HEK293 (cell line): ENCODE measurements at regions of chr2 and their contacts with region 1.

Region 1: DNA sequence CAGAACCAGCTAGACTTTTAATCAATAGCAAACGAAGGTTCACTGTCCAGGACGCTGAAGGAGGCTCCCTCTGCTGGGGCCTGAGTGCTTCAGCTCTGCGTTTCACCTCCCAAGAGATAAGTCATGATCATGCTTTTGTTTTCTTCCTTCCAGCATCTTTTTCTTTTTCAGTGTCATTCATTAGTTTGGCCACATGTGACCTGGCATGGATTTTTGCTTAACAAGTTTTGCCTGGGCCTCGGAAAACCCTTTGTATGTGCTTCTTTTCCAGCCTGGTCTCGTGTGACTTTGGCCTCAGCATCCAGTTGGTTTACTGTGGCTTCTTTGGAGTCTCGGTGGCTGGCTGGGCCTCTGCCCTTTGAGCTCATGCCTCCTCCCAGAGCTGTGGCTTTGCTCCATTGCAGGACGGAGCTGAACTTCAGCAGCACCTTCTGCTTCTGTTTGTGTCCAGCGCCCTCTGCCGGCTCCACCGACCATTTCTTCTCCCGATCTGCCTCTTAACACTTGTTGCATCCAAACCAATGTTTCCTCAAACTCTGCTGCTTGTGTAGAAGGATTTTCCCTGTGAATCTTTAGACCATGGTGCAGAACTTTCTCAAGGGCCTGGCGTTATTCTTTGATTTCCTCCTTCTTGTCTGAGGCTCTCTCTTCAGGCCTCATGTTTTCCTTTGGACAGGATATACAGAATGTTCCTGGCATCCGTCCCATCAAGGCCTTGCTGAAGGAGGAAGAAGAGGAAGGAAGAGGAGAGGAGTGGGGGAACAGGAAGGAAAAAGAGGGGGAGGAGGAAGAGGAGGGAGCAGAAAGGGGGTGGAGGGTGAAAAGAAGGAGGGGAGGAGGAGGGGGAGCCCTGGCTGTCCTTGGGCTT is 23.6 kb upstream of the HES6 start:
- H3K4me3 ChIP-seq: no peak overlapping the region
- H3K27ac ChIP-seq: no peak overlapping the region
- H3K4me1 ChIP-seq: no peaks in the 10 kb centered on the region
- CTCF ChIP-seq: peak; percentile 84

Region 2: DNA sequence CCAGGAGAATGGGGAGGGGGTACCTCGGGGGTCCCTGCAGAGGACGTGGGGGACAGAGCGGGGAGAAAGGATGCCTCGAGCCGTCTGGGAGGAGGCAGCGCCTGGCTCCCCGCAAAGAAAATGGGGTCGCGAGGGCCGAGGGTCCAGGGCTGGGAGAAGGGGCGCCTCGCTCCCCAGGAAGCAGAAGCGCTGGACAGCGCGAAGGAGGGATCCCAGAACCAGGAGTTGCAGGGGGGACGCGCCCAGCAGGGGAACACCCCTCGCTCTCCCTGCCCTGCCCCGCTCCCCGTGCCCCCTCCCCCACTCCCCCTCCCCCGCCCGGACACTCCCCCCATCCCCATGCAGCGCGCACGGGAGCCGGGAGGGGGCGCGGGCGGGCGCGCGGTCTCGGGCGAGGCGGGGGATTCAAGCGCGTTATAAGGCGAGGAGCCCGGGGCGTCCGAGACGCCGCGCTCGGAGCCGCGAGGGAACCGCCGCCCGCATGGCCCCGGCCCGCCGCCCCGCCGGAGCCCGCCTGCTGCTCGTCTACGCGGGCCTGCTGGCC is 104.8 kb before region 1 on chr2 and contains the start of gene ERFE:
- CTCF ChIA-PET with region 1: interaction called, 24 read pairs
- POLR2A ChIA-PET with region 1: interaction called, 4 read pairs
- H3K4me3 ChIP-seq: peak within 1 kb of the TSS; percentile 40
- H3K27ac ChIP-seq: peak within 1 kb of the TSS; percentile 63; the same call in 1 of the 2 replicates
- H3K4me1 ChIP-seq: no peaks in the 10 kb centered on the region; the same call in 1 of the 2 replicates
- CTCF ChIP-seq: no peak

Region 3: DNA sequence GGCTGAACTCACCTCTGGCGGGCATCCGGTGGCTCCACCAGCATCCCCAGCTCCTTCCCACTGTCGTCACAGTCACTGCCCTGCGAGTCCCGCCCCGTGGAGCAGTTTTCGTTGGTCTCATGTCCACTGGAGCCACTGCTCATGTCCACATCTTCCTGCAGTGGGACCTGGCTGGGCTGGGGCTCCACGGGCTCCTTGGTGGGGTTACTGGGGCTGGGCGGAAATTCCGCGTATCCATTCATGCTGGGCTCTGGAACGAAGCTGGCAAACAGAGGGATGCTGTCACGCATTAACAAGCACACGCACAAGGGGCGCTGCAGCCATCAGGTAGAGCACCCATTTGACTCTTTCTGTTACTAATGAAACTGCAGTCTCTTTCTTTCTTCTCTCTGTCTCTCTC is 14.3 kb after region 1 on chr2:
- CTCF ChIA-PET with region 1: interaction called, 54 read pairs
- POLR2A ChIA-PET with region 1: no interaction called
- H3K4me3 ChIP-seq: no peak overlapping the region
- H3K27ac ChIP-seq: no peak overlapping the region
- H3K4me1 ChIP-seq: no peaks in the 10 kb centered on the region
- CTCF ChIP-seq: peak; percentile 18; the same call in 1 of the 2 replicates

Region 4: GRCh38 chr2:238282861-238283738 is 19.7 kb after region 1 on chr2:
- CTCF ChIA-PET with region 1: interaction called, 54 read pairs
- POLR2A ChIA-PET with region 1: no interaction called
- H3K4me3 ChIP-seq: no peak overlapping the region
- H3K27ac ChIP-seq: no peak overlapping the region
- H3K4me1 ChIP-seq: peaks cover 16% of the 10 kb centered on the region
- CTCF ChIP-seq: no peak

Region 5: DNA sequence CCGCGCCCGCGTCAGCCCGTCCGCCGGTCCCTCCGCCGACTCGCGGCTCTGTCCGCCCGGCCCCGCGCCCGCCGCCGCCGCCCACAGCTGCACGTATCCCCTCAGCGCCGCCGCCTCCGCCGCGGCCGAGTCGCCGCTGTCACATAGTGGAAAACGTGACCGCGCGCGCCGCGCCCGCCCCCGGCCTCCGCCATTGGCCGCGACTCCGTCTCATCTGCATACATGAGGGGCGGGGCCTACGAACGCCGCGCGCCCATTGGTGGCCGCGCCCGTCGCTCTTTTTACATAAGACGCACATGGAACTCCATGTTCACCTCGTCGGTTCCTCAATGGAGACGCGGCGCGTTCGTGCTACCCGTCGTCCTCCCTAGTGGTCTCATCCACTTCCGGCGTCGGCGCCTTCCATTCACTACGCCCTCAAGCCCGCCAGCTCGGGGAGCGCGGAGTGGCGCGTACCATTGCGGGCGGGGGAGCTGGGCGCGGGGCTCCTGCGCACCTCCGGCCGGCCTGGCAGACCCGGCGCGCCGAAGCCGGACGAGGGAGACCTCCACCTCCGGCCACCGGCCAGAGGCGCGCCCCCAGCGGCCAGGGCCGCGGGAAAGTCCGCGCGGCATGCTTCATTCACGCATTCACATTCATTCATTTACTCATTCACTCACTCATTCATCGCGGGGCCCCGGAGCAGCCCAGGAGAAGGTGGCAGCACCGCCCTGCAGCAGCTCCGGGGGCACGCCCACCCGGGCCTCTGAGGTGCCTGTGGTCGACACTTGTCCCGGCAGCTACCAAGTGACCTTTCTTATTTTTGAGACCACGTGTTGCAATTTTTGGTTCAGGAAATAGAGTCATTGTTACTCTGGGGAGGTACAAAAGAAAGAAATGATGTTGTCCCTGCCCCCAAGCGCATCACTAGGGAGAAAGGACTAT is 25.5 kb after region 1 on chr2:
- CTCF ChIA-PET with region 1: interaction called, 17 read pairs
- POLR2A ChIA-PET with region 1: interaction called, 3 read pairs
- H3K4me3 ChIP-seq: peak overlapping the region; percentile 74
- H3K27ac ChIP-seq: peak overlapping the region; percentile 46; the same call in 1 of the 2 replicates
- H3K4me1 ChIP-seq: peaks cover 16% of the 10 kb centered on the region
- CTCF ChIP-seq: 0 out of 2 replicates have a peak, but pooled peaks have one; percentile 19